ENCODE measurements at regions of chr14 and their contacts with region 1.

Region 1: GRCh38 chr14:76876076-76876475 is 49.9 kb downstream of the LRRC74A start:
- DNase-seq: peak; percentile 81
- ATAC-seq: peak; percentile 95
- H3K4me3 ChIP-seq: no peak overlapping the region
- H3K27ac ChIP-seq: no peak overlapping the region
- H3K4me1 ChIP-seq: peaks cover 0 to 9% of the 10 kb centered on the region in 2 experiments; a peak in 3 of 4 replicates
- H3K27me3 ChIP-seq: no peaks in the 10 kb centered on the region
- CTCF ChIP-seq: peak; percentile 96 to 98 (median 97)
- POLR2A ChIP-seq: no peak
- RAD21 ChIP-seq: peak; percentile 100

Region 2: GRCh38 chr14:76918751-76919543 is 42.9 kb after region 1 on chr14:
- CTCF ChIA-PET with region 1: interaction called, 28 read pairs
- POLR2A ChIA-PET with region 1: no interaction called
- RAD21 ChIA-PET with region 1: interaction called, 5 to 10 read pairs
- intact Hi-C with region 1: loop called (anchors 1 kb)
- DNase-seq: peak; percentile 73
- ATAC-seq: peak; percentile 75
- H3K4me3 ChIP-seq: peak overlapping the region; percentile 4 to 30; a peak in 2 of 4 replicates
- H3K27ac ChIP-seq: peak overlapping the region; percentile 99
- H3K4me1 ChIP-seq: peaks cover 62 to 70% of the 10 kb centered on the region in 2 experiments
- H3K27me3 ChIP-seq: no peaks in the 10 kb centered on the region
- CTCF ChIP-seq: 0 out of 6 replicates have a peak, but pooled peaks of 1 of the 3 experiments have one; percentile 15
- POLR2A ChIP-seq: no peak
- RAD21 ChIP-seq: no peak

Region 3: GRCh38 chr14:77067632-77068514 is 191.8 kb after region 1 on chr14:
- CTCF ChIA-PET with region 1: interaction called, 272 read pairs
- POLR2A ChIA-PET with region 1: interaction called, 27 read pairs
- RAD21 ChIA-PET with region 1: interaction called, 40 to 54 read pairs
- intact Hi-C with region 1: loop called (anchors 1 kb)
- DNase-seq: peak; percentile 42
- ATAC-seq: peak; percentile 83
- H3K4me3 ChIP-seq: no peak overlapping the region
- H3K27ac ChIP-seq: no peak overlapping the region; the same call in 1 of the 2 replicates
- H3K4me1 ChIP-seq: peaks cover 21 to 34% of the 10 kb centered on the region in 2 experiments
- H3K27me3 ChIP-seq: no peaks in the 10 kb centered on the region
- CTCF ChIP-seq: peak; percentile 87 to 97 (median 95)
- POLR2A ChIP-seq: no peak
- RAD21 ChIP-seq: peak; percentile 99

Region 4: DNA sequence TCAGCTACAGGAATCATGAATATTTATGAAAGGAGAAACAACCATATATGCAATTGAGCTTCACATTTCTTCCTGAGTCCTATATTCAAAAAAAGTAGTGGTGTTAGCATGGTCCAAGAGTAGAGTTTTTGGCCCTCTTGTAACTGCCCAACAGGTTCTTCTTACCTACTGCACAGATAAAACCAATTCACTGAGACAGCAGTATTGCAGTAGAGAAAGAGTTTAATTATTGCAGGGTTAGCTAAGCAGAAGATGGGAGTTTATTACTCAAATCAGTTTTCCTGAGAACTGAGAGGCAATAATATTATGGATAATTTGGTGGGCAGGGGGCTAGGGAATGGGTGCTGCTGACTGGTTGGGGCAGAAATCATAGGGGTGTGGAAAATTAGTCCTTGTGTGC is 215.4 kb after region 1 on chr14:
- CTCF ChIA-PET with region 1: interaction called, 131 read pairs
- POLR2A ChIA-PET with region 1: interaction called, 8 read pairs
- RAD21 ChIA-PET with region 1: interaction called, 7 to 13 read pairs
- intact Hi-C with region 1: loop called (anchors 1 kb)
- DNase-seq: no peak
- ATAC-seq: no peak
- H3K4me3 ChIP-seq: no peak overlapping the region
- H3K27ac ChIP-seq: no peak overlapping the region
- H3K4me1 ChIP-seq: peaks cover 26 to 27% of the 10 kb centered on the region in 2 experiments
- H3K27me3 ChIP-seq: no peaks in the 10 kb centered on the region
- CTCF ChIP-seq: no peak
- POLR2A ChIP-seq: no peak
- RAD21 ChIP-seq: no peak

Region 5: DNA sequence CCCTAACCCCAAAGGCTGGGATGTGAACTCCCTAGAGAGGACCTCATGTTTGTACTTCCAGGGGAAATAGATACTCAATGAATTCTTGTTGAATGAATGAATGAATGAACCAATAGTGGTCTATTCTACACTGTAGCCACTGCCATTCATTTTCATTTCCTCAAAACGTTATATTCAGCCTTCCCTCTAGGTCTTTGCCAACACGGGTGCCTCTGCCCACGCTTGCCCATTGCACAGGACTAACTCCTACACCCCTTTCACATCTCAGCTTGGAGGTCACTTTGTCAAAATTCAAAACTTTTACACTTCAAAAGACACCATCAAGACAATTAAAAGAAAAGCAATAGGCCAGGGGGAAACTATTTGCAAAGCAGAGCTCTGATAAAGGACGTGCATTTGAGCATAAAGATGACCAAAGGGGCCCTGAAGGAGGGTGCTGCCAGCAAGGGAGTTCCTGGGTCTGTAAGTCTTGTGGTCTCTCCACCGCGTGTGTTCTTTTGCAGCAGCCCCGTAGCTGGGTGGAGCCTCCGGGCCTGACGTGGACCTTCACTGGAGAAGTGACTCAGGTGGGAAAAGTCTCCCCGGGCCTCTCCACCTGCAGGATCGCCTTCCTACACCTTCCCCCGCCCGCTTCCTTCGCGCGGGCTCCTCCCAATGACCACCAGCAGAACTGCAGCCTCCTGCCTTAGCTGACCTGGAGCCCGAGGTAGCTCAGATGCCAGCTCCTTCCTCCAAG is 337.0 kb after region 1 on chr14:
- CTCF ChIA-PET with region 1: no interaction called
- POLR2A ChIA-PET with region 1: no interaction called
- RAD21 ChIA-PET with region 1: no interaction called
- intact Hi-C with region 1: loop called (anchors 1 kb)
- DNase-seq: peak; percentile 28
- ATAC-seq: peak; percentile 99
- H3K4me3 ChIP-seq: no peak overlapping the region
- H3K27ac ChIP-seq: no peak overlapping the region
- H3K4me1 ChIP-seq: peaks cover 0 to 5% of the 10 kb centered on the region in 2 experiments; a peak in 2 of 4 replicates
- H3K27me3 ChIP-seq: no peaks in the 10 kb centered on the region
- CTCF ChIP-seq: peak; percentile 71 to 93 (median 83); a peak in 5 of 6 replicates
- POLR2A ChIP-seq: no peak
- RAD21 ChIP-seq: peak; percentile 82

Measured in HCT116 (cell line).